ENCODE measurements at regions of chr15 and their contacts with region 1.

Region 1: DNA sequence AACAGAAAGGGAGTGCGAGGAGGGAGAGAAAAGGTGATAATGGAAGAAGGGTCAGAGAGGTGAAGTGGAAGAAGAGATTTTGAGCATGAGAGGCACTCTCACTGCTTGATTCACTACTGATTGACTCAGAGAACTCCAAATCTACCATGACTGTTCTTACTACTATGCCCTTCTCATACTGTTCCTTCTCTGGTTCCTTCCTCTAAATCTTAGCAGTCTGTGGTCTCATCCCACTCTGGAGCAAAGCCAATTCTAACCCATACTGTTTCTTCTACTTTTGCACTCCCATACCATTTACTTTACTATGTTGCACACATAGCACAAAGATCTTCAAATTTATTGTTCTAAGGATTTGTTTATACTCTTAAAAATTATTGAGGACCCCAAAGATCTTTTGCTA is 100.8 kb downstream of the DTWD1 start:
- DNase-seq: no peak
- ATAC-seq: no peak
- H3K4me3 ChIP-seq: no peak overlapping the region
- H3K27ac ChIP-seq: no peak overlapping the region
- H3K4me1 ChIP-seq: no peaks in the 10 kb centered on the region
- H3K27me3 ChIP-seq: no peaks in the 10 kb centered on the region

Region 2: DNA sequence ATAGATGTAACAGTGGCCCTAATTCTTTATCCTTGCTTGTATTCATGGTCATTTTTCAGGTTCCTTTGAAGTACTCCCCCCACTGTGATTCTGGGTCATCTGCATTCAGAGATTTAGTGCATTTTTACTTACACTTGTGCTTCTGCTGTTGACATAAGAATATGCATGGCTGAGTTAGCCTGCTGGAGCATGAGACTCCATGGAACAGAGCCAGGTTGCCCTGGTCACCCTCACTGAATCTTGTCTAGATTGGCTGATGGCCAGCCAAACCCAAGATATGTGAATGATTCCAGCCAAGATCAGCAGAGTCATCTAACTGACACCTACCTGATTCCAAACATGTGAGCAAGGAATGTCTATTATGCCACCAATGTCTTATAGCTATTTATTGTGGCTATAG is 75.7 kb before region 1 on chr15:
- intact Hi-C with region 1: loop called in 1 of 2 experiments (anchors 10 kb)
- DNase-seq: peak in 1 of 2 donors; percentile 51
- ATAC-seq: peak; percentile 43
- H3K4me3 ChIP-seq: no peak overlapping the region
- H3K27ac ChIP-seq: peak overlapping the region; percentile 43 to 84
- H3K4me1 ChIP-seq: peaks cover 5 to 8% of the 10 kb centered on the region in 2 donors
- H3K27me3 ChIP-seq: no peaks in the 10 kb centered on the region

Measured in aorta (tissue), 5 donors.